K562 (cell line): ENCODE measurements at regions of chr14 and their contacts with region 1.

Region 1: DNA sequence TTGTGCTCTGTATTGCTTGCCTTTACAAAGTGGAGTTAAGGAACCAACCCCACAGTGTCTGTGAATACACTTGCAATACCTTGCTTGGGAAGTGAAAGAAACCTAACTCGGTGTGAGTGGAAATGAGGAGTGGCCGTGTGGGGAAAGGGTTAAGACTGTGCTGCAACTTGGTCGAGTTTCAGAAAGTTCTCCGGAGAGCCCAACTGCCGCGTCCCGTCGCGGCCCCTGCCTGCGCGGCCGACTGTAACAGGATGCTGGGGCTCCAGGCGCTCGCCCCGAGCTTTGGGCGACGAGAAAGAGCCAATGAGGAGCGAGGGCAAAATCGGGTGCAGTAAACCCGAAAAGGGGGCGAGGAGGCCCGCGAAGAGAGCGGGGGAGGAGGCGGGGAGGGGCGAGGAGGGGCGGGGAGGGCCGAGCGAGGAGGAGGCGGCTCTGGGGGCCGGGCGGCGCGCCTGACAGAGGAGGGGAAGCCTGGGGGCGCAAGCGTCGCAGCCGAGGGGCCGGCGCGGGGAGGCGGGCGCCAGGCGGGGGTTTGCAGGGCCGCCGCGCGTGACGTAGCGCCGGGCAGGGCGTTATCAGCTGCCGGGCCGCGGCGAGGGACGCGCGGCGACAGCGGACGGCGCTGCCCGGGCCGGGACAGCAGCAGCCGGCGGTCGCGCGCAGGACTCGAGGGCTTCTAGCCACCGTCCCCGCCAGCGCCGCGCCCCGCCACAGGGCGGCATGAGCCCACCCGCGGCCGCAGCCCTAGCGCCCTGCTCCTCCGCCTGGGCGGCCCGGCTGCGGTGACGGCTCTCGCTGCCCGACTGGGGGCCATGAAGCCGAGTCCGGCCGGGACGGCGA is at the start of gene DACT1:
- DNase-seq: peak; percentile 27 to 66 (median 48)
- ATAC-seq: peak; percentile 87
- H3K4me3 ChIP-seq: peak within 1 kb of the TSS; percentile 18
- H3K27ac ChIP-seq: no peak within 1 kb of the TSS
- H3K4me1 ChIP-seq: peaks cover 0 to 15% of the 10 kb centered on the region in 2 experiments; a peak in 2 of 5 replicates
- H3K27me3 ChIP-seq: peaks cover 14 to 19% of the 10 kb centered on the region in 2 experiments; a peak in 4 of 5 replicates
- CTCF ChIP-seq: no peak
- EP300 ChIP-seq: no peak
- POLR2A ChIP-seq: no peak
- RAD21 ChIP-seq: no peak
- polyA plus RNA-seq, gene DACT1: 0.07 to 0.13 TPM

Region 2: GRCh38 chr14:58292187-58292586 is 345.4 kb before region 1 on chr14:
- CTCF ChIA-PET with region 1: no interaction called
- POLR2A ChIA-PET with region 1: no interaction called
- in situ Hi-C with region 1: no loop called
- intact Hi-C with region 1: no loop called
- DNase-seq: no peak
- ATAC-seq: no peak
- H3K4me3 ChIP-seq: no peak overlapping the region
- H3K27ac ChIP-seq: no peak overlapping the region
- H3K4me1 ChIP-seq: no peaks in the 10 kb centered on the region; a peak in 2 of 5 replicates
- H3K27me3 ChIP-seq: no peaks in the 10 kb centered on the region
- CTCF ChIP-seq: no peak
- EP300 ChIP-seq: no peak
- POLR2A ChIP-seq: no peak
- RAD21 ChIP-seq: no peak

Region 3: GRCh38 chr14:59028476-59029202 is 391.0 kb after region 1 on chr14:
- CTCF ChIA-PET with region 1: no interaction called
- POLR2A ChIA-PET with region 1: no interaction called
- in situ Hi-C with region 1: no loop called
- intact Hi-C with region 1: loop called (anchors 10 kb)
- DNase-seq: peak; percentile 24 to 47 (median 26)
- ATAC-seq: peak; percentile 88
- H3K4me3 ChIP-seq: no peak overlapping the region
- H3K27ac ChIP-seq: no peak overlapping the region
- H3K4me1 ChIP-seq: no peaks in the 10 kb centered on the region
- H3K27me3 ChIP-seq: no peaks in the 10 kb centered on the region
- CTCF ChIP-seq: peak; percentile 67 to 74 (median 71)
- EP300 ChIP-seq: no peak
- POLR2A ChIP-seq: no peak
- RAD21 ChIP-seq: peak; percentile 74 to 79

Region 4: GRCh38 chr14:59055439-59056045 is 417.9 kb after region 1 on chr14:
- CTCF ChIA-PET with region 1: no interaction called
- POLR2A ChIA-PET with region 1: no interaction called
- in situ Hi-C with region 1: no loop called
- intact Hi-C with region 1: loop called (anchors 1 kb)
- DNase-seq: peak; percentile 12 to 32 (median 18)
- ATAC-seq: peak; percentile 70
- H3K4me3 ChIP-seq: no peak overlapping the region
- H3K27ac ChIP-seq: no peak overlapping the region
- H3K4me1 ChIP-seq: no peaks in the 10 kb centered on the region
- H3K27me3 ChIP-seq: no peaks in the 10 kb centered on the region
- CTCF ChIP-seq: peak; percentile 39 to 69 (median 43); a peak in 5 of 6 replicates
- EP300 ChIP-seq: no peak
- POLR2A ChIP-seq: no peak
- RAD21 ChIP-seq: peak; percentile 67 to 80